Right ventricle myocardium superior (tissue), 1 donor: ENCODE measurements at regions of chr10 and their contacts with region 1.

Region 1: DNA sequence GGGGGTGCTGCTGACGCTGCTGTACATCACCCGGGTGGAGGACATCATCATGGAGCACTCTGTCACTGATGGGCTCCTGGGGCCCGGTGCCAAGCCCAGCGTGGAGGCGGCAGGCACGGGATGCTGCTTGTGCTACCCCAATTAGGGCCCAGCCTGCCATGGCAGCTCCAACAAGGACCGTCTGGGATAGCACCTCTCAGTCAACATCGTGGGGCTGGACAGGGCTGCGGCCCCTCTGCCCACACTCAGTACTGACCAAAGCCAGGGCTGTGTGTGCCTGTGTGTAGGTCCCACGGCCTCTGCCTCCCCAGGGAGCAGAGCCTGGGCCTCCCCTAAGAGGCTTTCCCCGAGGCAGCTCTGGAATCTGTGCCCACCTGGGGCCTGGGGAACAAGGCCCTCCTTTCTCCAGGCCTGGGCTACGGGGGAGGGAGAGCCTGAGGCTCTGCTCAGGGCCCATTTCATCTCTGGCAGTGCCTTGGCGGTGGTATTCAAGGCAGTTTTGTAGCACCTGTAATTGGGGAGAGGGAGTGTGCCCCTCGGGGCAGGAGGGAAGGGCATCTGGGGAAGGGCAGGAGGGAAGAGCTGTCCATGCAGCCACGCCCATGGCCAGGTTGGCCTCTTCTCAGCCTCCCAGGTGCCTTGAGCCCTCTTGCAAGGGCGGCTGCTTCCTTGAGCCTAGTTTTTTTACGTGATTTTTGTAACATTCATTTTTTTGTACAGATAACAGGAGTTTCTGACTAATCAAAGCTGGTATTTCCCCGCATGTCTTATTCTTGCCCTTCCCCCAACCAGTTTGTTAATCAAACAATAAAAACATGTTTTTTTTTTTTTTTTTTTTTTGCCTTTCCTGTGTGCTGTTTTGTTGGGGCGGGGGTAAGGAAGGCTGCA is 55.8 kb downstream of the TSPAN15 start:
- DNase-seq: no peak
- ATAC-seq: peak; percentile 9

Region 2: DNA sequence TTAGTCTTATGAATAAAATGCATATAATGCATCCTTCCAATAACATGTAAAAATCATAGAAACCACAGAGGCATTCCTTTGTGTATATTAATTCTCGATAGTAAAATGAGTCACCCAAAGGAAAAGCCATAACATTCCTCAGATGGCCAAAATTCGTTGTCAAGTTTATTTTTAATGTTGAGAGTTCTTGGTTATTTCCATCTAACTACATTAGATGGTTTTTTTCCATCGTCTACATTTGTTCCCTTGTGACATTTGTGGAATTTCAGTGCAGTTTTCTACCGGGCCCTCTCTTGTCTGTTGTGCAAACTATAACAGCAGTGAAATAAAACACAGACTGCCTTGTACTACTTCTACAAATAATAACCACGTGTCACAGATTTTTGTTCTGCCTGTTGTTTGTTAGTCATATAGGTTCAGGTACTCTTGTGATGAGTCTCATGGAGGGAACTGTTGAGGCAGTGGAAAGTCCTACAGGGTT is 840.8 kb before region 1 on chr10:
- intact Hi-C with region 1: no loop called
- DNase-seq: no peak
- ATAC-seq: no peak

Region 3: GRCh38 chr10:69237528-69238159 is 269.4 kb before region 1 on chr10:
- intact Hi-C with region 1: loop called (anchors 10 kb)
- DNase-seq: peak; percentile 93
- ATAC-seq: peak; percentile 99

Region 4: DNA sequence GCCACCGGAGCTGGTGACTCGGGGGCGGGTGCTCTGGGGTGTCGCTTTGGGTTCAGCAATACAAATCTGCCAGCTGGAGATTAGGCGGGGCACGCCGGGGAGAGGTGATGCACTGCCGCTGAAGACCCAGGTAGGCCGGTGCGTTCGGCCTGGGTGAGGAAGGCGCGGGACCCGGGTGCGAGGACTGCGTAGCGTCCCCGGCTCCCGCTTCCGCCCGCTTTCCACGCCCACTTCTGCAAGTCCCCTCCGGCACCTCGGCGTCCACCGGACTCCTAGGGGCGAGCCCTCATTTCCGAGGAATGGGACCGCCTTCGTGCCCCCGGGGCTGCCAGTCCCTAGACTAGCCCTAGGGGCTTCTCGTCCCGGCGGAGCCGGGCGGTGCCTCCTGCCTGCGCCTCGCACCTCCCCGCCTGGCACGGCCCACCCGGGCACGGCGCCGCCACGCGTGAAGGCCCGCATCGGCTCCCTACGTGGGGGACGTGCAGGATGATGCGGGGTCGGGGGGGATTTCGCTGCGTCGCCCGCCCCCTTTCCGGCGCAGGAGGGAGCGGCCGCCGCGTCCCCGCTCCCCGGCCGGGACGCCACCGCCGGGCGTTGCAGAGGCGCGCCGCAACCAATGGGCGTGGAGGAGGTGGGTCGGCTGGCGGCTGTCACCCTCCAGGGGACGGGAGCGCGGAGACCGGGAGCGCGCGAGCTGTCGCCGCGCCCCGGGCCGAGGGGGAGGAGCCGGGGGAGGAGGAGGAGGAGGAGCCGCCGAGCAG is 188.8 kb before region 1 on chr10:
- intact Hi-C with region 1: no loop called
- DNase-seq: peak; percentile 94
- ATAC-seq: peak; percentile 98

Region 5: DNA sequence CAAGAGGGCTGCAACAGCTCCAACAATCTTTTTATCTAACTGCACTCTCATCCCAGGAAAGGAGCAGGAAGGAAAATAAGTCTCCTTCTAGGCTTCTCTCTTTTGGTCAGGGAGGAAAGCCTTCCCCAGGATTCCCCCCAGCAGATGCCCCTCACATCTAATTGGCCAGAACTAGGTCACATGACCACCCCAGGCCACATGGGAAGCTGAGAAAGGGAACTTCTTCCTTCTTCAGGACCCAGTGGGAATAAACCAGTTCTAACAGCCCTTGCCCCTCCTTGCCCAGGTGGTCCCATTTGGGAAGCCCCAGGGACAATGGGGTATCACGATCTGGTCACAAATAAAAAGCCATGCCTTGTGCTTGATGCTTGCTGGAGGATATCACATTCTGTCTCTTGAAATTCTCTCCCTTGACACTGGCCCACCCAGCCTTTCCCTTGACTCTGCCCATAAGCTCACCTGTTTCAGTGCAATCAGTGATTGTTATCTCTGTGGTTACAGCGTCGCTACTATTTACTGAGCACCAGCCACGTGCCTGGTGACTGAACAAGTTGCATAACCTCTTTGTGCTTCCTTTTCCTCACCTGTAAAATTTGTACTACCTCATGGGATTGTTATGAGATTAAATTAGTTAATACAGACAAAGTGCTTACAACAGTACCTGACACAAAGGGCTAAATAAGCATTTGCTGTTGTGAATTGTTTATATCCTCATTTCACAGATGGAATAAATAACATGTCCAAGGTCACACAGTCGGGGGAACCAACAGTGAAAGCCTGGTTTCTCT is 81.4 kb before region 1 on chr10:
- intact Hi-C with region 1: loop called (anchors 2 kb)
- DNase-seq: no peak
- ATAC-seq: no peak